Panc1 (cell line): ENCODE measurements at regions of chr1 and their contacts with region 1.

Region 1: DNA sequence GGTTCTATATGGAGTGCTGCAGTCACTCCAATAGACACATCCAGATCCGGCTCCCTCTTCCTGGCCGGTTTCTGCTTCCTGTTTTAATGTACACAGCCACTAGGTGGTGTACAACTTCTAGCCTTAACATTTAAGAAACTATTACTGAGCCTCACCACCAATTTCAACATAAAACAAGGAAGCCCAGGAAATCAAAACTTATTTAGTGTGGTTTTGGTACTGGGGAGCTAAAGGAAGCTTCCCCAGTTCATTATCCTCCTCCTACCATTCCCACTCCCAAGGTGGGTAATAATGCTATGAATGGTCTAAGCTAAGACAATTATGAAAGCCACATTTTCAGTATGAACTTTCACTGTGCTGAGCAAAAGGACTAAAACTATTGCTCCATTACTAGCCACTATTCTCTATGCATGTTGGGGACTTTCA is 25.5 kb upstream of the MTMR11 start:
- DNase-seq: peak; percentile 51
- ATAC-seq: peak; percentile 96
- H3K4me3 ChIP-seq: no peak overlapping the region
- H3K27ac ChIP-seq: no peak overlapping the region
- H3K4me1 ChIP-seq: no peaks in the 10 kb centered on the region
- H3K27me3 ChIP-seq: no peaks in the 10 kb centered on the region
- CTCF ChIP-seq: peak; percentile 84

Region 2: GRCh38 chr1:149997585-149998262 is 35.6 kb after region 1 on chr1:
- CTCF ChIA-PET with region 1: no interaction called
- POLR2A ChIA-PET with region 1: no interaction called
- in situ Hi-C with region 1: no loop called
- intact Hi-C with region 1: no loop called
- DNase-seq: no peak
- ATAC-seq: no peak
- H3K4me3 ChIP-seq: no peak overlapping the region
- H3K27ac ChIP-seq: no peak overlapping the region
- H3K4me1 ChIP-seq: no peaks in the 10 kb centered on the region
- H3K27me3 ChIP-seq: no peaks in the 10 kb centered on the region
- CTCF ChIP-seq: no peak

Region 3: DNA sequence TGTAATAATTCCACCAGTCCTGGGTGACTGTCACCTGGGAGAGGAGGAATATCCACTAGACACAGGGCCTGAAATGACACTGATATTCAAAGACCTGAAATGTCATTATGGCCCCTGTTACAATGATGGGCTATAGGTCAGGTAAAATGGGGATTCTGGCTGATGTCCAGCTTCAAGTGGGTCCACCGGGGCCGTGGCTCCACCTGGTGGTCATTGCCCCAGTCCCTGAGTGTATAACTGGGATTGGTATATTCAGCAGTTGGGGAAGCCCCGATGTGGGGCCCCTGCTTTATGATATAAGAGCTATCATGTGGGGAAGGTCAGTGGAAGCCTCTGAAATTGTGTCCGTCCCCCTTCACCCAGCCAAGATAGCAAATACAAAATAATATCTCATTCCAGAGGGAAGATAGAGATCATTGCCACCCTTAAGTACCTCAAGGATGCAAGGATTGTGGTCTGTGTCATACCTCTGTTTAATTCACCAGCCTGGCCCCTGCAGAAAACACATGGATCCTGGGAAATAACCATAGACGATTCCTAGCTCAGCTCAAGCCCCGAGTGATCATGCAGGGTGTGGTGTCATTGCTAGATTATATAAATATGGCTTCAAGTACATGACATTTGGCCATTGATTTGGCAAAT is 206.9 kb after region 1 on chr1:
- CTCF ChIA-PET with region 1: no interaction called
- POLR2A ChIA-PET with region 1: no interaction called
- in situ Hi-C with region 1: no loop called
- intact Hi-C with region 1: loop called (anchors 5 kb)
- DNase-seq: peak; percentile 39
- ATAC-seq: peak; percentile 81
- H3K4me3 ChIP-seq: no peak overlapping the region
- H3K27ac ChIP-seq: no peak overlapping the region
- H3K4me1 ChIP-seq: no peaks in the 10 kb centered on the region
- H3K27me3 ChIP-seq: no peaks in the 10 kb centered on the region
- CTCF ChIP-seq: peak; percentile 92